CD4-positive, alpha-beta T cell (primary cell): ENCODE measurements at regions of chr6 and their contacts with region 1.

Region 1: DNA sequence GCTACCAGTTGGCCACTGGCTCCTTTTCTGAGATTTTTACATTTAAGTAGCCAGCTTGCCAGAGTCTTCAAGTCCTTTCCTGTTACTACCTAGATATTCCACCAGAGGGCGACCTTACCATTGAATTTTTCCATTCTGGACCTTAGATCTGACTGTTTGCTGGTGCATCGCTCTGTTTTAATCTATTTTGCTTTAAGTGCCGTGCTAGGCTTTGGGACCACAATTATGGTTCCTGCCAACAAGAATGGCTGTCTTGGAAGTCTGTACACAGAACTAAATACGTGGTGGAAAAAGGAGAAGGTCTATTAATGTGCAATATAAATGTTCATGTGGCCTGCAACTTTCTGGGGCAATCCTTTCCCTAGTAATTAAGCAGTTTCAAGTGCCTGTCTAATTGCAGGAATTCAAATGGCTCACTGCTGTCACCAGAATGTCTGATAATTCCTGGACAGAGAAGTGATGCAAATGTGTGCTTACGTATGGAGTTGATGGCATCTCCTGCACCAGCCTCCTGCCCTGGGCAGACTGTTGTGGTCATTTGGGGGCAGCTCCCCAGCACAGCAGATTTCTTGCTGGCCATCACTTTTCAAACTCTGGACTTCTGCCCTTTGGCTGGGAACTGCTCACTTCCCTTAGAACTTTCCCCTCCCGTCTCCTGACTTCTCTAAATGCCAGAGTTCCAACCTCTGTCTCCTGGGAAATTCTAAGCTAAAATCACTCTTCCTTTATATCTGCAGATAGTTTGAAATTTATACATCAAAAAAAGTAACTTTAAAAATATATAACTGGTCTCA is 5.6 kb upstream of the HLA-DOA start:
- DNase-seq: peak in 9 of 14 experiments; percentile 8 to 88 (median 48)
- ATAC-seq: peak; percentile 78
- H3K4me3 ChIP-seq: no peak overlapping the region
- H3K4me3 Mint-ChIP-seq: no peak overlapping the region
- H3K27ac ChIP-seq: no peak overlapping the region
- H3K27ac Mint-ChIP-seq: no peak overlapping the region
- H3K4me1 ChIP-seq: peaks cover 22% of the 10 kb centered on the region
- H3K4me1 Mint-ChIP-seq: peaks cover 36% of the 10 kb centered on the region
- H3K27me3 ChIP-seq: peaks cover 8 to 10% of the 10 kb centered on the region in 2 experiments
- H3K27me3 Mint-ChIP-seq: peaks cover 5% of the 10 kb centered on the region
- CTCF ChIP-seq: peak; percentile 89

Region 2: DNA sequence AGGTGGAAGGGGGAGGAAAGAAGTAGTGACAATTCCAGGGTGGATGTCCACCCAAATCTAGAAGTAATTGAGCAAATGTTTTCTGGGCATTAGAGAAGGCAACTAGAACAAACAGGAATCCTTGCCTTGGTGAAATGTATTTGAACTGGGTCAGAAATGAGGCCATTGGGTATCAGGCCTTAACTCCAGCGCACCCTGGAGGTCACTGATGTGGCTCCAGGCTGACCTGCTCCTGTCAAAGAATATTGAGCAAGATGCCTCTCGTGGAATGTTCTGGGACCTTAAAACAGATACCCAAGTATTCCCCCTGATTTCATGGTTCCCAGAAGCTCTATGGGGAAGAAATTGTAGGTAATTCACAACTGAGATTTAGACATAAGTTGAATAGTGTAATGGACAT is 67.7 kb after region 1 on chr6:
- CTCF ChIA-PET with region 1: interaction called, 4 read pairs
- POLR2A ChIA-PET with region 1: no interaction called
- intact Hi-C with region 1: loop called (anchors 1 kb)
- DNase-seq: peak in 3 of 14 experiments; percentile 38 to 73 (median 46)
- ATAC-seq: peak; percentile 67
- H3K4me3 ChIP-seq: no peak overlapping the region
- H3K4me3 Mint-ChIP-seq: no peak overlapping the region
- H3K27ac ChIP-seq: no peak overlapping the region
- H3K27ac Mint-ChIP-seq: no peak overlapping the region
- H3K4me1 ChIP-seq: peaks cover 14% of the 10 kb centered on the region
- H3K4me1 Mint-ChIP-seq: peaks cover 11% of the 10 kb centered on the region
- H3K27me3 ChIP-seq: no peaks in the 10 kb centered on the region
- H3K27me3 Mint-ChIP-seq: peaks cover 9% of the 10 kb centered on the region
- CTCF ChIP-seq: peak; percentile 39

Region 3: DNA sequence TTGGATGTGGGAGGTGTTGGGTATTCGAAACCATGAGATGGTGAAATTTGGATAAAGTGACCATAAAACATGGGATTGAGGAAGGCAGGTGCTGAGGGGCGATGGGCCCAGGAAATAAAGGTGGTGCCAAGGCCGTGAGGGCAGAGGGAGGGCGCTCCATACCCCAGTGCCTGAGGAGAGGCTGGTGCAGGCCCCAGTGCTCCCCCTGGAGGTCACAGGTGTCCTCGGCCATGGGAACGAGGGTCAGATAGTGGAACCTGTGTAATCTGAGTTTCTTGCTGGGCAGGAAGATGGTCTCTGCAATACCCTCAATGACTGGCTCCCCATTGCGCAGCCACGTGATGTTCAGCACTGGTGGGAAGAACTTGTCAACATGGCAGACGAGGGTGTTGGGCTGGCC is 76.9 kb after region 1 on chr6:
- CTCF ChIA-PET with region 1: no interaction called
- POLR2A ChIA-PET with region 1: no interaction called
- intact Hi-C with region 1: loop called (anchors 1 kb)
- DNase-seq: peak; percentile 33 to 78 (median 52)
- ATAC-seq: peak; percentile 61
- H3K4me3 ChIP-seq: no peak overlapping the region
- H3K4me3 Mint-ChIP-seq: no peak overlapping the region
- H3K27ac ChIP-seq: no peak overlapping the region
- H3K27ac Mint-ChIP-seq: no peak overlapping the region
- H3K4me1 ChIP-seq: peaks cover 7% of the 10 kb centered on the region
- H3K4me1 Mint-ChIP-seq: no peaks in the 10 kb centered on the region
- H3K27me3 ChIP-seq: peaks cover 3 to 14% of the 10 kb centered on the region in 2 experiments
- H3K27me3 Mint-ChIP-seq: peaks cover 22% of the 10 kb centered on the region
- CTCF ChIP-seq: peak; percentile 66